ENCODE measurements at regions of chr17 and their contacts with region 1.

Region 1: GRCh38 chr17:58517734-58518609 is 3.5 kb upstream of the MTMR4 start:
- DNase-seq: peak; percentile 100
- ATAC-seq: peak; percentile 92 to 94
- H3K4me3 ChIP-seq: peak overlapping the region; percentile 64
- H3K27ac ChIP-seq: peak overlapping the region; percentile 98
- H3K4me1 ChIP-seq: peaks cover 8% of the 10 kb centered on the region
- H3K27me3 ChIP-seq: no peaks in the 10 kb centered on the region

Region 2: DNA sequence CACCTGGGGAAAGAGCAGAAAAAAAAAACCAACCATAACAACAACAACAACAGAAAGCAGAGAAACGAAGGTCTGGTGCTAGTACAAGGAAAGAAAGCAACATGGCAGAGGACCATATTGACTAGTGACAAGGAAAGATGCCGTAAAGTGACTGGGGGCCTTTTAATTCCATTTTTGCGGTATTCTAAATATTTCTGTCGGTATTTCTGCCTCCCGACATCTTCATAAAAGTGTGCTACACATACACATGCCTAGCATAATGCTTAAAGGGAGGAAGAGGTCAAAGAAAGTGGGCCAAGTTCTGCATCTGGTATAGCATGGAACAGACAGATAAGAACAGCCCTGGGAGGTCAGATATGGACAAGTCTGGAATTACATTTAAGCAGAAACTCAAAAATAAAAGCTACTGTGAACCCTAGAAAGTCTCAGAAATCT is 81.2 kb before region 1 on chr17:
- intact Hi-C with region 1: no loop called
- DNase-seq: no peak
- ATAC-seq: no peak
- H3K4me3 ChIP-seq: no peak overlapping the region
- H3K27ac ChIP-seq: no peak overlapping the region
- H3K4me1 ChIP-seq: no peaks in the 10 kb centered on the region
- H3K27me3 ChIP-seq: no peaks in the 10 kb centered on the region

Region 3: DNA sequence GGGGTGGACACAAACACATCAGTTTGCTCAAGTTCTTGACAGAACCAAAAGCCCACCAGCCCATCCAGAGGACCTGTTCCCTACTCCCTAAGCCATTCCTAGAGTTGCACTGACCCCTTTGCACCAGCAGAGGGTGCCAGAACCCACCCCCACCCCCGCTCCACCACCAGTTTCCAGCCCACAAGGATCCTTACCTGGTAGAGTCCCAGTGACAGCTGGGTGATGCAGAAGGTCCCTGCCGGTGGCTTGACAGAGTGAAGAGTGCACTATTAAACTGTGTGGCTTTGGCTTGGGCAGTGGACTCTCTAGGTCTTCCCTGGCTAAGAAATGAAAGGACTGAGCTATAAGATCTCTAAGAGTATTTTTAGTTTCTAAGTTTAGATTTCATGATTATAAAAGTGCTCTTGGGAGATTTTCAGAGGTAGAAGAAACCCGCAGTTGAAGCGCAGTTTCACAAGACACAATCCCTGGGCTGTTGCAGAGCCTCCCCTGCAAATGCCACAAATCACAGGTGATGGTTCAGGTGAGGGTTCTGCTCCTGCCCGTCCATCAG is 69.8 kb after region 1 on chr17:
- intact Hi-C with region 1: loop called in 1 of 4 experiments (anchors 5 kb)
- DNase-seq: peak; percentile 31 to 74 (median 65)
- ATAC-seq: peak; percentile 63 to 81
- H3K4me3 ChIP-seq: no peak overlapping the region
- H3K27ac ChIP-seq: no peak overlapping the region
- H3K4me1 ChIP-seq: no peaks in the 10 kb centered on the region
- H3K27me3 ChIP-seq: no peaks in the 10 kb centered on the region

Region 4: DNA sequence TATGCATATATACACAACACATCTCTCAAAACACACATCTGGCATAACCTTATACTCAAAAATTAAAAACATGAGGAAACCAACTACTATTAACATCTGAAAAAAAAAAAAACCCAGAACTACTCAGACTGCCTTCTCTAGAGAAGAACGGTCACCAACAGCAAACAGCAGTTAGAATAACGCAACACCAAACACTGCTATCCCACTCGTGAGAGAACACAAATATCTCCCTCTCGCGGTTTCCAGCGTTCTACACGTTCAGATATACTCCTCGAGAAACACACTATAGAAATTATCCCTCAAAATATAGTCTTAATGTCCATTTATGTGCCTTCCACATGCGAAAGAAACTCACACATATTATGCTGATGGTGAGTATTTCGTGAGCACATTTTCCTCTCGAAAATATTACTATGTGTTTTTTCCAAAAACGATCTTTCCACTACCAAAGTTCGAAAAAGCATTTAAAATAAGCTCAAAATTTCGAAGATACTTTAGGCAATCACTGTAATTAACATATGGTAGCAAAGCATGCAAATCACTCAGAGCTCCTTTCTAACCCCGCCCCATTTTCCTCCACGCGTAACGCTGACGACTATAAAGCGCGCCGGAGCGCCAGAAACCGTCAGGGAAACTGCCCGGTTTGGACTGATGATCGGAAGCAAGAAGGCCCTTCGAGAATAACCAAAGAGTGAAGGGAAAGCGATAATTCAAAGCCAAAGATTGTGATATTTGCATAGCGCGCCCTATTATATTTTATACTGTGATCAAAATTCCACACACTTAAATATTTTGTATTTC is 113.8 kb after region 1 on chr17:
- intact Hi-C with region 1: loop called in 1 of 4 experiments (anchors 5 kb)
- DNase-seq: peak; percentile 94 to 97 (median 96)
- ATAC-seq: peak; percentile 98
- H3K4me3 ChIP-seq: peak overlapping the region; percentile 81
- H3K27ac ChIP-seq: peak overlapping the region; percentile 95
- H3K4me1 ChIP-seq: peaks cover 3% of the 10 kb centered on the region
- H3K27me3 ChIP-seq: no peaks in the 10 kb centered on the region

Region 5: DNA sequence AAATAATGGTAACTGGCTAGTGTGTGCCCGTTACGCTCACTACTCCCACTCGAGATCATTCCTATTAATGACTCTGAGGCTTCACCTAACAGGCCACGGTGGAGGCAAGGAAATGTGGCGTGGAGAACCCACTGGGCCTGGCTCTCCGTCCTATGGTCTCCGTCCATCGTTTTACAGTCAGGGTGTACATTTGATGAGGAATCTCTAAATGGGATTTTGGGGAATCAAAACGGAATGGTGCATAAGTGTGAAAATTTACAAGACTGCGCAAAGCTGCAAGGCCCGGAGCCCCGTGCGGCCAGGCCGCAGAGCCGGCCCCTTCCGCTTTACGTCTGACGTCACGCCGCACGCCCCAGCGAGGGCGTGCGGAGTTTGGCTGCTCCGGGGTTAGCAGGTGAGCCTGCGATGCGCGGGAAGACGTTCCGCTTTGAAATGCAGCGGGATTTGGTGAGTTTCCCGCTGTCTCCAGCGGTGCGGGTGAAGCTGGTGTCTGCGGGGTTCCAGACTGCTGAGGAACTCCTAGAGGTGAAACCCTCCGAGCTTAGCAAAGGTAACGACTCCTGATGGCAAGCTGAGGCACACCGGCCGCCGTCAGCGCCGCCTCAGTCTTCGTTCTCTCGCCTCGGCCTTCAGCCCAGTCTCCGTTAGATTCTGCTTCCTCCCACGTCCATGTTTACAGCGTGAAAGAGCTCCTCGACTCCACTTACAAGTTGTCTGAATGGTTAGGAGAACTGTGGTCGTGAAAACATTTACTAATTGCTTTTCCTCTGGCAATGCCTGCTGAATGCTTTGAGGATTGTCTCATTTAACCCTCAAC is 174.5 kb after region 1 on chr17 and contains the start of gene RAD51C:
- intact Hi-C with region 1: loop called in 3 of 4 experiments (anchors 5 kb)
- DNase-seq: peak; percentile 89 to 95 (median 94)
- ATAC-seq: peak; percentile 100
- H3K4me3 ChIP-seq: peak within 1 kb of the TSS; percentile 62
- H3K27ac ChIP-seq: peak within 1 kb of the TSS; percentile 49
- H3K4me1 ChIP-seq: no peaks in the 10 kb centered on the region
- H3K27me3 ChIP-seq: no peaks in the 10 kb centered on the region
- total RNA-seq, gene RAD51C: 30.4 to 41.6 (median 36.9) TPM

Region 6: GRCh38 chr17:59004338-59005111 is 486.6 kb after region 1 on chr17:
- intact Hi-C with region 1: loop called in 3 of 4 experiments (anchors 5 to 10 kb)
- DNase-seq: peak; percentile 32 to 67 (median 53)
- ATAC-seq: peak; percentile 66 to 67
- H3K4me3 ChIP-seq: no peak overlapping the region
- H3K27ac ChIP-seq: no peak overlapping the region
- H3K4me1 ChIP-seq: no peaks in the 10 kb centered on the region
- H3K27me3 ChIP-seq: no peaks in the 10 kb centered on the region